Activated T-helper 1 cell treated with anti-CD3 and anti-CD28 coated beads, Interleukin-12 subunit alpha, Interleukin-12 subunit beta, Interleukin-2, Interleukin-4 antibody, amounts not matched to agents 30 ng/mL and 10 ng/mL and 1 ng/mL, durations not matched to agents 14 hours and 24 hours and 36 hours (primary cell): ENCODE measurements at regions of chr6 and their contacts with region 1.

Region 1: DNA sequence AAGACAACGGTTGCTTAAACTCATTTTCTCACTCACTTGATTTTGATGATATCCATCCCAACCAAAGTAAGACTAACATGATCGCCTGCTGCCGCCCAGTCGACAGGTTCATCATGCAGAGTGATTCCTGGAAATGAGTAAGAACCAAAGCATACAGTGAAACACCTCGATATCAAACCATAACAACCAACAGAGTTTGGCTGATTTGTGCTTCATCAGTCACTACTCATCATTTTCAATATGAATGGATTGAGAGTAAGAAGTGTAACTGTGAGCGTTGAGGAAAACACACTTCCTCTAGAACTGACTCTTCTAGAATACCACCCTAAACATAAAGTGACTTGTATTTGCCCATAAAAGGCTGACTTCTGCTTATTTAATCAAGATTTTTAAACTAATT is 29.2 kb upstream of the ALDH8A1 start:
- DNase-seq: peak; percentile 52
- H3K4me3 Mint-ChIP-seq: peak overlapping the region; percentile 43
- H3K27ac Mint-ChIP-seq: peak overlapping the region; percentile 65
- H3K4me1 Mint-ChIP-seq: peaks cover 58% of the 10 kb centered on the region
- H3K27me3 Mint-ChIP-seq: no peaks in the 10 kb centered on the region

Region 2: GRCh38 chr6:134436281-134436815 is 542.8 kb before region 1 on chr6:
- intact Hi-C with region 1: loop called (anchors 1 kb)
- DNase-seq: peak; percentile 74
- H3K4me3 Mint-ChIP-seq: peak overlapping the region; percentile 55
- H3K27ac Mint-ChIP-seq: peak overlapping the region; percentile 99
- H3K4me1 Mint-ChIP-seq: peaks cover 41% of the 10 kb centered on the region
- H3K27me3 Mint-ChIP-seq: no peaks in the 10 kb centered on the region

Region 3: GRCh38 chr6:135002229-135002844 is 23.2 kb after region 1 on chr6:
- intact Hi-C with region 1: loop called (anchors 1 kb)
- DNase-seq: no peak
- H3K4me3 Mint-ChIP-seq: no peak overlapping the region
- H3K27ac Mint-ChIP-seq: no peak overlapping the region
- H3K4me1 Mint-ChIP-seq: peaks cover 13% of the 10 kb centered on the region
- H3K27me3 Mint-ChIP-seq: no peaks in the 10 kb centered on the region

Region 4: DNA sequence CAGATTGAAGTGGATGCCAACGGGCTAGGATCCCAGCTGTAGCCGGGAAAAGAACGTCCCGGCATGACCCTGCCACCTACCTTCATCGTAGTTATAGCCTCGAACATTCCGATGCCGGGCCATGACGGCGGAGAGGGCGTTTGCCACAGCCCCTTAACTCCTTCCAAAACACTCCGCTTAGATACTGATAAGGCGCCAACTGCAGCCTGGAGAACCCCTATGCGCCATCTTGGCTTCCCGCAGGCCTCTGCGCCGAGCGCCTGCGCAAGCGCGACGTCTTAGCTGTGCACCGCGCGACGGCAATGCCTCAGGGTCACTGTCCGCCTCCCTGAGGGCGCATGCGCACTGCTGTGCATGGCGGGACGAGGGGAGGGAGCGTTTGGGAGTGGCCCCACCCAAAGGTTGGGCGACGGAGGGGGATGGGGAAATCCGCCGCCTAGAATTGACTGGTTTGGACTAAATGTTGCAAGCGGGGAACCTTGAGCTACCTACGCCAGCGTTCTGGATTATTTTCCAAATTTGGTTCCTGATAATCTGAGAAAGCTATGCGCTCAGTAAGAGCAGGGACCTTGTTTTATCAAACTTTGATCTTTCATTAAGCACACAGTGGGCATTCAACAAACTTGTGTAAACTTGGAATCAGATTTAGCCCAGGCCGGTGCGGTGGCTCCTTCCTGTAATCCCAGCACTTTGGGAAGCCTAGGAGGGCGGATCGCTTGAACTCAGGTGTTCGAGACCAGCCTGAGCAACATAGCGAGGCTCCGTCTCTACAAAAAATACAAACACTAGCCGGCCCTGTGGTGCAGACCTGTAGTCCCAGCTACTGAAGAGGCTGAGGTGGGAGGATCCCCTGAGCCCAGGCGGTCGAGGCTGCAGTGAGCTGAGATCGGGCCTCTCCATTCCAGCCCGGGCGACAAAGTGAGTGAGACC is 75.7 kb after region 1 on chr6 and contains the start of gene HBS1L:
- intact Hi-C with region 1: loop called (anchors 1 kb)
- DNase-seq: peak; percentile 99
- H3K4me3 Mint-ChIP-seq: peak within 1 kb of the TSS; percentile 94
- H3K27ac Mint-ChIP-seq: peak within 1 kb of the TSS; percentile 96
- H3K4me1 Mint-ChIP-seq: peaks cover 42% of the 10 kb centered on the region
- H3K27me3 Mint-ChIP-seq: peaks cover 2% of the 10 kb centered on the region
- total RNA-seq, gene HBS1L: 104 and 115 TPM in 2 replicates

Region 5: DNA sequence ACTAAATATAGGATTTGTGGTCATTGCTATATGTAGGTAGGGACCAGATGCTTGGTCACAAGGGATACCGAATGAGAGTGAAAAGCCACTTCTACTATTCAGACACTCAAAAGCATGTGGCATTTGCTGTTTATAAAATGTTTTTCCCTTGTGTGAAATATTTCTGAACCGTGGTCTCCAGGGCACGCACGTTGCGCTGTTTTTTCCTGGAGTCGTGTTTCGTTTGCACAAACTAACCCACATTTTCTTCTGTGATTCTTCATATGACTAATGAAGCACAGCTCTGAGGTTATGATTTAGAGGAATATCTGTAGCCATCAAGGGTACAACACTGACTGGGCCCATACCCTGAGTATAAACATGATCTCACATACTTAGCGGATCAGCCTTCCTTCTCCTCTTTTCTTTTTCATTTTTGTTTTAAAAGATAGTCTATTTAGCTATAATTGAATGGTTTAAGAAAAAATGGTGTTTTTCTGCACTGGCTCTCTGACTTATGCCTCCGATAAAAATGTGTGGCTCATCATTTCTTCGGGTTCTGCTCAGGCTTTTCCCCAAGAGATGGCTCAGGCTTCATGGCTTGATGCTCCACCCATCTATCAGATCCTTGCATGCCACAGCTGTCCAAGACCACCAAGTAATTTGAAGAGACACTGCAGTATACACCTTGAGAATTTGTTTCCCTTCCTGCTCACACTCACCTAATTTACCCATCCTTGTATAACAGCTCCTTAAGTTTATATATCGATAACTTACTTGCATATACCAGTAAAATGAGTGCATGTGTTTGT is 135.4 kb after region 1 on chr6:
- intact Hi-C with region 1: loop called (anchors 1 kb)
- DNase-seq: peak; percentile 53
- H3K4me3 Mint-ChIP-seq: peak overlapping the region; percentile 66
- H3K27ac Mint-ChIP-seq: peak overlapping the region; percentile 97
- H3K4me1 Mint-ChIP-seq: peaks cover 88% of the 10 kb centered on the region
- H3K27me3 Mint-ChIP-seq: no peaks in the 10 kb centered on the region

Region 6: GRCh38 chr6:135162678-135163439 is 183.7 kb after region 1 on chr6:
- intact Hi-C with region 1: loop called (anchors 1 kb)
- DNase-seq: no peak
- H3K4me3 Mint-ChIP-seq: peak overlapping the region; percentile 53
- H3K27ac Mint-ChIP-seq: peak overlapping the region; percentile 87
- H3K4me1 Mint-ChIP-seq: peaks cover 83% of the 10 kb centered on the region
- H3K27me3 Mint-ChIP-seq: no peaks in the 10 kb centered on the region

Region 7: DNA sequence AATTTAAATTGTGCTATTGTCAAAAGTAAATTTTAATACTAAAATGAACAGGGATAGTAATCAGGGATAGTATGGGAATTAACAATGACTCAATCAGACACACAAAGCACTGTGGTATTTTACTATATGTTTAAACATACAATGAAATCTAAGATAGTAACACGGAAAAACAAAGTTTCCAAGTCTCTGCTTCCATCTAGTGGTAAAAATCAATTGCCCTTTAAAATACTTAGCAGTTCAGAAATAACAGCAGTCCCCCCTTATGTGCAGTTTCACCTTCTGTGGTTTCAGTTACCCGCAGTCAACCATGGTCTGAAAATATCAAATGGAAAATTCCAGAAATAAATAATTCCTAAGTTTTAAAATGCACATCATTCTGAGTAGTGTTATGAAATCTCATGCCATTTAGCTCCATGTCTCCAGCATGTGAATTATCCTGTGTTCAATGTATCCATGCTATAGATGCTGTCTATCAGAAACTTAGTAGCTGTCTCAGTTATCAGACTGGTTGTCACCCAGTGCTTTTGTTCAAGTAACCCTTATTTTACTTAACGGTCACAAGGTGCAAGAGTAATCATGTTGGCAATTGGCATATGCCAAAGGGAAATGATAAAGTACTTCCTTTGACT is 459.9 kb after region 1 on chr6:
- intact Hi-C with region 1: loop called (anchors 1 kb)
- DNase-seq: no peak
- H3K4me3 Mint-ChIP-seq: peak overlapping the region; percentile 43
- H3K27ac Mint-ChIP-seq: peak overlapping the region; percentile 67
- H3K4me1 Mint-ChIP-seq: peaks cover 27% of the 10 kb centered on the region
- H3K27me3 Mint-ChIP-seq: no peaks in the 10 kb centered on the region